ENCODE measurements at regions of chr3 and their contacts with region 1.

Region 1: DNA sequence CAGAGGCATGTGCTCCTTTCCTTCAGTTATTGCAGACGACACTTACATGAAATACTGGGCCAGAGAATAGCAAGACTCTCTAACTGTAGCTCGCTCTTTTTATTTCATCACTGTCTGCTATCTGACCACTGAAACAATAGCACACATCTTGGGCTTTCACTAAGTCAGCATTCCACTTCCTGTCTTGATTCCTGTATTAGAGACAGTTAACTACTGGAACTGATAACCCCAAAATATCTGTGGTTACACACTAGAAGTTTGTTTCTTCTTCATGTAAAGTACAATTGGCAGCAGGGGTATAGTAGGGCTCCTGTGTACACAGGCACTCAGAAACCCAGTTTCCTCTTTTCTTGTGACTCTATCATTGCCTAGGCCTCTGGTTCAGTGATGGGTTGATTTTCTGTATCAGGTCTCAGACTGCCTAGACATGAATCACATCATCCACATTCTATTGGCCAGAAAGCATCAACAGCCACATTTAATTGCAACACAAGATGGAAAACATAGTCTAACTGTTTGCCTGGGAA is 230.2 kb upstream of the CD96 start:
- DNase-seq: peak; percentile 39
- ATAC-seq: peak; percentile 87
- H3K4me3 Mint-ChIP-seq: peak overlapping the region; percentile 36
- H3K27ac Mint-ChIP-seq: peak overlapping the region; percentile 90
- H3K4me1 Mint-ChIP-seq: peaks cover 34% of the 10 kb centered on the region
- H3K27me3 Mint-ChIP-seq: no peaks in the 10 kb centered on the region

Region 2: DNA sequence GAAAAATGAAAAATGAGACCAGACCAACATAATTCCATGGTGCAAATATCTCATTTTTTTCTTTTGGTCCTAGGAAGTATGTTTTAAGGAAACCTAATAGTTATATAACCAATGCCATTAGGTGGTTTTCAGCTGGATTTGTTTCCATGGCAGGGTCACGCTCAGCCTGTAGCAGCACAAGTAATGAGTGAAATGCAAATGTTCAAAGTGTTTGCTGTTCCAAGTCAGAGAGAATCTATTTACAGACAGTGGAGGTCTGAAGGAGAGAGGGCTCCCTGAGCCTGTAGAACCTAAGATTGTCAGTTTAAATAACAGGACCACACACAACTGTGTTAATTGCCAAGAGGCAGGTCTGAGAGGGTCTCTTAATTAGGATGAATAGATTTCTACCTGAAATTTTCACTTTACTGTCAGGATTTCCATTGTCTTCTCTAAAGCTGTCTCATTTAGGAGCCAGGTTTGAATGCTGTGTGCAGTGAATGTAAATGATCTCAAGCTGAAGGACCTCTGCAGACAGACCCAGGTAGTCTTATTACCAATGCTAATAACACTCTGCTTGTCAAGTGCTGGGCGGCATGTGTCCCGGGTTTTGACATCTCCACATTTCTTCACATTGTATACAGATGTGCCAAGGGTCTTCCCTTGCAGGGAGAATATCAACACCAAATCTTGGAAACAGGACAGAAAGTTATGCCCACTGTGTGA is 557.4 kb before region 1 on chr3:
- CTCF ChIA-PET with region 1: no interaction called
- POLR2A ChIA-PET with region 1: no interaction called
- DNase-seq: no peak
- ATAC-seq: no peak
- H3K4me3 Mint-ChIP-seq: no peak overlapping the region
- H3K27ac Mint-ChIP-seq: no peak overlapping the region
- H3K4me1 Mint-ChIP-seq: no peaks in the 10 kb centered on the region
- H3K27me3 Mint-ChIP-seq: no peaks in the 10 kb centered on the region

Region 3: GRCh38 chr3:111190518-111190917 is 121.3 kb before region 1 on chr3:
- CTCF ChIA-PET with region 1: no interaction called
- POLR2A ChIA-PET with region 1: no interaction called
- DNase-seq: no peak
- ATAC-seq: no peak
- H3K4me3 Mint-ChIP-seq: no peak overlapping the region
- H3K27ac Mint-ChIP-seq: no peak overlapping the region
- H3K4me1 Mint-ChIP-seq: peaks cover 11% of the 10 kb centered on the region
- H3K27me3 Mint-ChIP-seq: no peaks in the 10 kb centered on the region

Region 4: DNA sequence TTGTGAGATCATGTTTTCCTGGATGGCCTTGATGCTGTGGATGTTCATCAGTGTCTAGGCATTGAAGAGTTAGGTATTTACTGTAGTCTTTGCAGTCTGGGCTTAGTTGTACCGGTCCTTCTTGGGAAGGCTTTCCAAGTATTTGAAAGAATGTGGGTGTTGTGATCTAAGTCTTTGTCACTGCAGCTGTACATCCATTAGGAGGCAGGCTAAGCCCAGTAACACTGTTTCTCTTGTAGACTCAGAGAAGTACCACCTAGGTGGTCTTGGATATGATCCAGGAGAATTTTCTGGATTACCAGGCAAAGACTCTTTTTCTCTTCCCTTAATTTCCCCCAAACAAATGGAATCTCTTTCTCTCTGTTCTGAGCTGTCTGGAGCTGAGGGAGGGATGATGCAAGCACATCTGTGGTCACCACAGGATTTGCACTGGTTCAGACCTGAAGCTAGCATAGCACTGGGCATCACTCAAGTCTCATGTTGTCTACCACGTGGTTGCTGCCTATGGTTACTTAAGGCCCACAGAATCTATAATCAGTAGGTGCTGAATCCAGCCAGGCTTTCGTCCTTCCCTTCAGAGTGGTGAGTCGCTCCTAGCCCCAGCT is 12.6 kb before region 1 on chr3:
- CTCF ChIA-PET with region 1: interaction called, 11 read pairs
- POLR2A ChIA-PET with region 1: interaction called, 3 read pairs
- DNase-seq: no peak
- ATAC-seq: peak; percentile 56
- H3K4me3 Mint-ChIP-seq: no peak overlapping the region
- H3K27ac Mint-ChIP-seq: no peak overlapping the region
- H3K4me1 Mint-ChIP-seq: peaks cover 58% of the 10 kb centered on the region
- H3K27me3 Mint-ChIP-seq: no peaks in the 10 kb centered on the region

Region 5: DNA sequence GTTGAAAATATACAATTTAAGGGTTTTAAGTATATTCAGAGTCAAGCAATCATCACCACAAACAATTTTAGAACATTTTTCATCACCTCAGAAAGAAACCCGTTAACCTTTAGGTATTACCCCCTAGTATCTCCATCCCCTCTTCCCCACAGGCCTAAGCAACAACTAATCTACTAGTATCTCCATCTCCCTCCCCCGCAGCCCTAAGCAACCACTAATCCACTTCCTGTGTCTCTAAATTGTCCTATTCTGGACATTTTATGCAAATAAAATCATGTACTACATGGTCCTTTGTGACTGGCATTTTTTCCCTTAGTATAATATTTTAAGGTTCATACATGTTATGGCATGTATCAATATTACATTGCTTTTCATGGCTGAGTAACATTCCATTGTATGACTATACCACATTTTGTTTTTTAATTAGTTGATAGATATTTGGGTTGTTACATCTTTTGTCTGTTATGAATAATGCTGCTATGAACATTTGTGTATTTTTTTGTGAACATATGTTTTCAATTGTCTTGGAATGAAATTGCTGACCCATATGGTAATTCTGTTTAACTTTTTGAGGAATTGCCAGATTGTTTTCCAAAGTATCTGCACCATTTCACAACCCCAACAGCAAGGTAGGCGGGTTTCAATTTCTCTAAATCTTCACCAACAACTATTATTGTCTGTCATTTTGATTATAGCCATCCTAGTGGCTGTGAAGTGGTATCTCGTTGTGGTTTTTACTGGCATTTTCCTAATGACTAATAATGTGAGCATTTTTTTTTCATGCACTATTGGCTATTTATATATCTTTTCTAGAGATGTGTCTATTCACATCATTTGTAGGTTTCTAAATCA is 14.6 kb after region 1 on chr3:
- CTCF ChIA-PET with region 1: interaction called, 20 read pairs
- POLR2A ChIA-PET with region 1: interaction called, 3 read pairs
- DNase-seq: peak; percentile 36
- ATAC-seq: no peak
- H3K4me3 Mint-ChIP-seq: no peak overlapping the region
- H3K27ac Mint-ChIP-seq: peak overlapping the region; percentile 11
- H3K4me1 Mint-ChIP-seq: peaks cover 40% of the 10 kb centered on the region
- H3K27me3 Mint-ChIP-seq: no peaks in the 10 kb centered on the region

Region 6: DNA sequence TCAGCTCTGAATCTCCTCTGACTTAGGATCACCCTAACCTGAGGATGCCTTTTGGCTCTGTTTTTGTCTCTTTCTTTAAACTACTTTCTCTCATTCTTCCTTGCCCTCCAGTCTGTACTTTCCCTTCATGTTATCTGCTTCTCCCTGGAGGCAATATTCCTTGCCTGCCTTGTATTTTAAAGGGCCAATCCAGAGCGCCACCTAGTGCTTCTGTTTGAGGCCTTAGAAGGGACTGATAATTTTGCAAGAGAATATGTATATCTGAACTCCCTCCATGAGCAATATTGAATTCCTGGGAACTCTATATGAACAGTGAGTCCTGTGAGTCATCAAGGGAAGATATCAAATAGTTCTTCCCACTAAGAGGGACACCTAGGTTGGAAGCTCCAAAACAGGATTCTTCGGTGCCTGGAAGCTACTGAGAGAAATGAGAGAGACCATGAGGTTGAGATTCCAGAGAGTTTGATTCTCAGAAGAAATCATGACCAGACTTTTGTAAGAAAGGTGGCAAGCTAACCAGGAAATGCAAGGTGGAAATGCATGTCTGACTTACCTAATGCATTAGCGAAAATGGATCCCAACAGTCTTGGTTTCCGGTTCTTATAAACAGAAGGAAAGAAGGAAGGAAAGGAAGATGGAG is 26.4 kb after region 1 on chr3:
- CTCF ChIA-PET with region 1: interaction called, 11 read pairs
- POLR2A ChIA-PET with region 1: interaction called, 6 read pairs
- DNase-seq: peak; percentile 69
- ATAC-seq: no peak
- H3K4me3 Mint-ChIP-seq: no peak overlapping the region
- H3K27ac Mint-ChIP-seq: peak overlapping the region; percentile 12
- H3K4me1 Mint-ChIP-seq: peaks cover 23% of the 10 kb centered on the region
- H3K27me3 Mint-ChIP-seq: no peaks in the 10 kb centered on the region

Region 7: GRCh38 chr3:111794711-111795110 is 482.9 kb after region 1 on chr3:
- CTCF ChIA-PET with region 1: no interaction called
- POLR2A ChIA-PET with region 1: no interaction called
- DNase-seq: no peak
- ATAC-seq: no peak
- H3K4me3 Mint-ChIP-seq: no peak overlapping the region
- H3K27ac Mint-ChIP-seq: no peak overlapping the region
- H3K4me1 Mint-ChIP-seq: no peaks in the 10 kb centered on the region
- H3K27me3 Mint-ChIP-seq: no peaks in the 10 kb centered on the region